ENCODE measurements at regions of chr17 and their contacts with region 1.

Region 1: DNA sequence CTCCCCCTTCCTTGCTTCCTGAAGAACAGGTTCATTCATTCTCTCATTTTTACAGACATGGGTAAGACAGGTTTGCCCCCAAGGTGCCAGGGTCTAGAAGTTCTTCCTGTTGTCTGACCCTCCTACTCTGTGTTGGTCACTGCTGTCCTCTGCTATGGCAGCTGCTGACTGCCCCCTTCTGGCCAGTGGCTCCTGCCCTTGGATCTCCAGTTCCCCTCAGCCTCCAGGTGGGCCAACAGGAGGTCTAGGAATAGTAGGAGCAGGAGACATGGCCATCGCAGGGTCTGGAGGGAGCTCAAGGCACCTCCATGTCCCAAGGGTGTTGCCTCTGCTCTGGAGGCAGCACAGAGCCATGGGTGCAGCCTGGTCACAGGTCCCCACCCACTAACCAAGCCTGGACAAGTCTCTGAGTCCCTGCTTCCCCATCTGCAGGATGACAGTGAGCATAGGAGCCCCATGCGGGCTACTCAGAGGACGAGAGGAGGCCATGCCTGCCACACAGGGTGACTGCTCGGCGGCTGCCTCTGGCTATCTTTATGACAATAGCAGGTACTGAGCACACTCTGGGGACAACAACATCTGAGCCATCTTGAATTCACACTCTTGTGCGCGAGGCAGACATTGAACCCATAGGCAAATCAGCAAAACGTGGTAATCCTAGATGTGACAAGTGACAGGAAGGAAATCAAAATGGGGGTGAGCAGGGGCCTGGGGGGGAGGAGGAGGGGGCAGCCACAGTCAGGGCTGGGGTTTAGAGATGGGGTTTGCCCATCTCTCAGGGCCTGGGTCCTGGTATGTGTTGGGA is 27.0 kb upstream of the NXPH3 start:
- DNase-seq: peak in 1 of 3 donors; percentile 22
- H3K4me3 ChIP-seq: no peak overlapping the region
- H3K4me3 Mint-ChIP-seq: no peak overlapping the region
- H3K27ac ChIP-seq: no peak overlapping the region
- H3K27ac Mint-ChIP-seq: no peak overlapping the region
- H3K4me1 ChIP-seq: peaks cover 0 to 1% of the 10 kb centered on the region in 2 donors
- H3K4me1 Mint-ChIP-seq: peaks cover 2% of the 10 kb centered on the region
- H3K27me3 ChIP-seq: no peaks in the 10 kb centered on the region
- H3K27me3 Mint-ChIP-seq: peaks cover 5 to 10% (median 8%) of the 10 kb centered on the region in 3 donors
- CTCF ChIP-seq: peak; percentile 29

Region 2: DNA sequence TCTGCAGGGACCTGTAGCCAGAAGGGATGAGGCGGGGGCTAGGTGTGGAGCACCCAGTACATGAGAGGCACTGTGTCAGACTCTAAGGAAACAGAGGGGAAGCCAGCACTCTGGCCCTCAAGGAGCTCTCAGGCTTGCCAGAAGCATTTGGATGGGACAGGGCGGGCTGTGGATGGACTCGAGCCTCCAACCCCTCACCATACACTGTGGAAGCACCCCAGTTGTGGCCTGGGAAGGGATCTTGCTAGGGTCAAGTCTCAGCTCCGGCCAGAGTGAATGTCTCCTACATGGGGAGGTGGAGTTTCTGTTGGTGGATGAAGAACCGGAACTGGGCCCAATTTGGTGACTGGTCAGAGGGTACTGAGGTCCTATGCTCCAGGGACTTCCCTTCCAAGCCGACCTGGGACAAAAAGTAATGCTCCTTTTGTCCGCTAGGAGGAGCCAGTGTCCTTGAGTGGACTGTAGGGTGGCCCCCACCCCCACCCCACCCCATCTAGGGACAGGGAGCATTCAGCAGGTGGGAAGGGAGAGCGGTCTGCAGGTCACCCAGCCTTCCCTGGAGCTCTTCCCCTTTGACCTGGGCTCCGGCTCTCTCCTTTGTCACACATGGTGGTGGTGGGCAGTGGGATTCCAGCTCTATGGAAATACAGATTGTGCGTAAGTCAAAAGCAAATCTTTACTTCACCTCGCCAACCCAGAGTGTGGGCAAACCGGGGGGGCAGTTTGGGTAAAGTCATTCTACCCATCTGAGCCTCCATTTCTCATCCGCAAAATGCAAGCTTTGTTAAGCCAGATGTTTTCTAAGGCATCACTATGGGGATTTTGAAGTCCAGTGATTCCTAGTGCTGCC is 113.7 kb before region 1 on chr17:
- intact Hi-C with region 1: loop called (anchors 10 kb)
- DNase-seq: peak; percentile 31 to 62 (median 39)
- H3K4me3 ChIP-seq: no peak overlapping the region
- H3K4me3 Mint-ChIP-seq: no peak overlapping the region
- H3K27ac ChIP-seq: no peak overlapping the region
- H3K27ac Mint-ChIP-seq: peak overlapping the region in 1 of 7 donors; percentile 60
- H3K4me1 ChIP-seq: peaks cover 12 to 15% of the 10 kb centered on the region in 2 donors
- H3K4me1 Mint-ChIP-seq: peaks cover 15% of the 10 kb centered on the region
- H3K27me3 ChIP-seq: peaks cover 0 to 7% of the 10 kb centered on the region in 2 donors
- H3K27me3 Mint-ChIP-seq: peaks cover 23 to 27% (median 24%) of the 10 kb centered on the region in 3 donors
- CTCF ChIP-seq: peak; percentile 82

Region 3: GRCh38 chr17:49471089-49471683 is 77.5 kb before region 1 on chr17:
- intact Hi-C with region 1: no loop called
- DNase-seq: no peak
- H3K4me3 ChIP-seq: no peak overlapping the region
- H3K4me3 Mint-ChIP-seq: peak overlapping the region in 1 of 2 donors; percentile 54
- H3K27ac ChIP-seq: no peak overlapping the region
- H3K27ac Mint-ChIP-seq: peak overlapping the region in 1 of 7 donors; percentile 22
- H3K4me1 ChIP-seq: peaks cover 0 to 3% of the 10 kb centered on the region in 2 donors
- H3K4me1 Mint-ChIP-seq: peaks cover 4% of the 10 kb centered on the region
- H3K27me3 ChIP-seq: peaks cover 27 to 62% of the 10 kb centered on the region in 2 donors
- H3K27me3 Mint-ChIP-seq: peaks cover 60 to 71% (median 66%) of the 10 kb centered on the region in 3 donors
- CTCF ChIP-seq: no peak